T-cell (primary cell): ENCODE measurements at regions of chr5 and their contacts with region 1.

Region 1: GRCh38 chr5:43313035-43313853 is at the start of gene HMGCS1:
- DNase-seq: peak; percentile 96 to 100 (median 99)
- ATAC-seq: peak; percentile 89 to 92 (median 90)
- H3K4me3 ChIP-seq: peak within 1 kb of the TSS; percentile 81 to 88
- H3K4me3 Mint-ChIP-seq: peak within 1 kb of the TSS; percentile 93 to 95 (median 93)
- H3K27ac ChIP-seq: peak within 1 kb of the TSS; percentile 95
- H3K27ac Mint-ChIP-seq: peak within 1 kb of the TSS; percentile 84 to 97
- H3K4me1 ChIP-seq: peaks cover 12 to 14% of the 10 kb centered on the region in 2 experiments
- H3K4me1 Mint-ChIP-seq: peaks cover 27 to 48% (median 41%) of the 10 kb centered on the region in 3 donors
- H3K27me3 ChIP-seq: no peaks in the 10 kb centered on the region
- H3K27me3 Mint-ChIP-seq: no peaks in the 10 kb centered on the region
- total RNA-seq, gene HMGCS1: 29.2 to 49.1 (median 36.2) TPM

Region 2: GRCh38 chr5:42950440-42951292 is 362.6 kb before region 1 on chr5:
- CTCF ChIA-PET with region 1: no interaction called
- POLR2A ChIA-PET with region 1: interaction called in 1 of 2 experiments, 10 read pairs
- DNase-seq: peak; percentile 17 to 80 (median 41)
- ATAC-seq: peak; percentile 17 to 58 (median 44)
- H3K4me3 ChIP-seq: peak overlapping the region; percentile 77 to 98
- H3K4me3 Mint-ChIP-seq: peak overlapping the region; percentile 96 to 98 (median 98)
- H3K27ac ChIP-seq: peak overlapping the region; percentile 99
- H3K27ac Mint-ChIP-seq: peak overlapping the region; percentile 100
- H3K4me1 ChIP-seq: peaks cover 15 to 46% of the 10 kb centered on the region in 2 experiments
- H3K4me1 Mint-ChIP-seq: peaks cover 34 to 45% (median 40%) of the 10 kb centered on the region in 3 donors
- H3K27me3 ChIP-seq: no peaks in the 10 kb centered on the region
- H3K27me3 Mint-ChIP-seq: no peaks in the 10 kb centered on the region

Region 3: DNA sequence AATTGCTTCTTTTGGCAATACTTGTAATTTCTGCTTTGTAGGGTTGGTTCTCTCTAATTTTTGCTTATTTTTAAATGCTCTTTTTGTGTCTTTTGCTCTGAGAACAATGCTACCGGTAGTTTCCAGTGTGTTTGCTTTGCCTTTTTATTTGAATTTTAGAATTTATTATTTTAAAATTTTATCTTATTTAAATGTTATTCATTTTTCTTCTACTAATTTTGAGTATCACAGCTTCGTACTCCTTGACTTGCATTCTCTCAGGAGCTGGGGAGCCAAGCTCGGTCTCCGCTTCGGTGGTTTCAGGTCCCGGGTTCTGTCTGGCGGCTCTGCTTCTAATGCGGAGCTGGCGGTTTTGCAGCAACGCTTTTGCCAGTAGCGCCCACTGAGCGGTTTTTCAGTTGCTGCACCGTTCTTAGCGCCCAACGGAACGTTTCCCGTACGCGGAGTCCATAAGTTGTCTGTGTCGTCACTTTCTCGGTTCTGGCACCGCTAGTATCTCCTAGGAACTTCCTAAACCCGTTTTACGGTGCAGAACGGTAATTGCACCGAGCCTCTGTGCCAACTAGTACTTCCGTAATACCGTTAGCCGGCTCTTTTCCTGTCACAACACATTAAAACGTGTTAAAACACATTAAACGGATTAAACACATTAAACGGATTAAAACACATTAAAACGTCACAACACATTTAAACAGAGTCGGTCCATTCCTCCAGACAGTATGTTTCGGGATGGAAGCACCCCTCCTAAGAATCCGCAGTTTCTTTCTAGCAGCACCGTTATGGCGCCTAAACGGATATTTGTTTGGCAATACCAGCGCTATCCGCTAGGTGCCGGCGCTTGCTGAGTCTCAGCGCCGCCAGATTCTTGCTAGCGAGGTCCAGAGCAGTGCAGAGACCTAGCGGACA is 318.7 kb before region 1 on chr5:
- CTCF ChIA-PET with region 1: interaction called, 3 to 7 read pairs
- POLR2A ChIA-PET with region 1: interaction called in 1 of 2 experiments, 10 read pairs
- DNase-seq: peak; percentile 73 to 91 (median 82)
- ATAC-seq: peak; percentile 62 to 72 (median 66)
- H3K4me3 ChIP-seq: peak overlapping the region; percentile 83 to 95
- H3K4me3 Mint-ChIP-seq: peak overlapping the region; percentile 99 to 100 (median 100)
- H3K27ac ChIP-seq: peak overlapping the region; percentile 89
- H3K27ac Mint-ChIP-seq: peak overlapping the region; percentile 100
- H3K4me1 ChIP-seq: peaks cover 22 to 32% of the 10 kb centered on the region in 2 experiments
- H3K4me1 Mint-ChIP-seq: peaks cover 29 to 37% (median 35%) of the 10 kb centered on the region in 3 donors
- H3K27me3 ChIP-seq: no peaks in the 10 kb centered on the region
- H3K27me3 Mint-ChIP-seq: no peaks in the 10 kb centered on the region

Region 4: GRCh38 chr5:43085453-43085852 is 227.8 kb before region 1 on chr5:
- CTCF ChIA-PET with region 1: no interaction called
- POLR2A ChIA-PET with region 1: interaction called, 4 to 11 read pairs
- DNase-seq: no peak
- ATAC-seq: no peak
- H3K4me3 ChIP-seq: no peak overlapping the region
- H3K4me3 Mint-ChIP-seq: no peak overlapping the region
- H3K27ac ChIP-seq: no peak overlapping the region
- H3K27ac Mint-ChIP-seq: no peak overlapping the region
- H3K4me1 ChIP-seq: no peaks in the 10 kb centered on the region
- H3K4me1 Mint-ChIP-seq: no peaks in the 10 kb centered on the region
- H3K27me3 ChIP-seq: no peaks in the 10 kb centered on the region
- H3K27me3 Mint-ChIP-seq: no peaks in the 10 kb centered on the region

Region 5: GRCh38 chr5:43638546-43638945 is 325.3 kb after region 1 on chr5:
- CTCF ChIA-PET with region 1: no interaction called
- POLR2A ChIA-PET with region 1: interaction called in 1 of 2 experiments, 10 read pairs
- DNase-seq: no peak
- ATAC-seq: no peak
- H3K4me3 ChIP-seq: no peak overlapping the region
- H3K4me3 Mint-ChIP-seq: no peak overlapping the region
- H3K27ac ChIP-seq: no peak overlapping the region
- H3K27ac Mint-ChIP-seq: no peak overlapping the region
- H3K4me1 ChIP-seq: no peaks in the 10 kb centered on the region
- H3K4me1 Mint-ChIP-seq: peaks cover 25 to 36% (median 29%) of the 10 kb centered on the region in 3 donors
- H3K27me3 ChIP-seq: no peaks in the 10 kb centered on the region
- H3K27me3 Mint-ChIP-seq: no peaks in the 10 kb centered on the region